ENCODE measurements at regions of chr15 and their contacts with region 1.

Region 1: DNA sequence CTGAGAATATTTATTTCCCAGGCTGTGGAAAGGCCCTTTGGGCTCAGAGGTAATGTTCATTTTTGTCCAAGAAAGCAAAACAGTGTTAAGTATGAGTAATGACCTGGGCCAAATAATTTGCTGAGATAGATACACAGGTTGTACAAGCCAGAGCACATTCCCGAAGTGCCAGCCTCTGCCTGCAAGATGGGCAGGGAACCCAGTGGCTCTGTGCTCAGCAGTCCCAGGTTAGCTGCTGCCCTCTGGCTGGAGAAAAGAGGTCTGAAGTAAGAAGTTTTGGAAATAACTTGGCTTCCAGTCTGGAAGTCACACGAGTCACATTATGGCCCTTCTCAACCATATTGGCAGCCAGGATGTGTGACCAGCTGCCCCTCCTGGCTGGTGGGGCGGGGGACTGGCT is 20.2 kb downstream of the MYZAP start:
- DNase-seq: peak; percentile 84
- H3K4me3 Mint-ChIP-seq: no peak overlapping the region
- H3K27ac Mint-ChIP-seq: peak overlapping the region; percentile 35
- H3K4me1 Mint-ChIP-seq: peaks cover 51% of the 10 kb centered on the region
- H3K27me3 Mint-ChIP-seq: no peaks in the 10 kb centered on the region
- CTCF ChIP-seq: peak; percentile 51

Region 2: GRCh38 chr15:57570994-57571393 is 40.9 kb before region 1 on chr15:
- CTCF ChIA-PET with region 1: interaction called, 297 read pairs
- POLR2A ChIA-PET with region 1: interaction called, 26 read pairs
- intact Hi-C with region 1: no loop called
- DNase-seq: peak; percentile 89
- H3K4me3 Mint-ChIP-seq: no peak overlapping the region
- H3K27ac Mint-ChIP-seq: peak overlapping the region; percentile 89
- H3K4me1 Mint-ChIP-seq: peaks cover 27% of the 10 kb centered on the region
- H3K27me3 Mint-ChIP-seq: no peaks in the 10 kb centered on the region
- CTCF ChIP-seq: no peak

Region 3: GRCh38 chr15:57596978-57597377 is 15.0 kb before region 1 on chr15:
- CTCF ChIA-PET with region 1: interaction called, 23 read pairs
- POLR2A ChIA-PET with region 1: interaction called, 14 read pairs
- intact Hi-C with region 1: no loop called
- DNase-seq: peak; percentile 84
- H3K4me3 Mint-ChIP-seq: no peak overlapping the region
- H3K27ac Mint-ChIP-seq: no peak overlapping the region
- H3K4me1 Mint-ChIP-seq: peaks cover 13% of the 10 kb centered on the region
- H3K27me3 Mint-ChIP-seq: no peaks in the 10 kb centered on the region
- CTCF ChIP-seq: no peak

Measured in MCF 10A (cell line).